Natural killer cell (primary cell): ENCODE measurements at regions of chr1 and their contacts with region 1.

Region 1: DNA sequence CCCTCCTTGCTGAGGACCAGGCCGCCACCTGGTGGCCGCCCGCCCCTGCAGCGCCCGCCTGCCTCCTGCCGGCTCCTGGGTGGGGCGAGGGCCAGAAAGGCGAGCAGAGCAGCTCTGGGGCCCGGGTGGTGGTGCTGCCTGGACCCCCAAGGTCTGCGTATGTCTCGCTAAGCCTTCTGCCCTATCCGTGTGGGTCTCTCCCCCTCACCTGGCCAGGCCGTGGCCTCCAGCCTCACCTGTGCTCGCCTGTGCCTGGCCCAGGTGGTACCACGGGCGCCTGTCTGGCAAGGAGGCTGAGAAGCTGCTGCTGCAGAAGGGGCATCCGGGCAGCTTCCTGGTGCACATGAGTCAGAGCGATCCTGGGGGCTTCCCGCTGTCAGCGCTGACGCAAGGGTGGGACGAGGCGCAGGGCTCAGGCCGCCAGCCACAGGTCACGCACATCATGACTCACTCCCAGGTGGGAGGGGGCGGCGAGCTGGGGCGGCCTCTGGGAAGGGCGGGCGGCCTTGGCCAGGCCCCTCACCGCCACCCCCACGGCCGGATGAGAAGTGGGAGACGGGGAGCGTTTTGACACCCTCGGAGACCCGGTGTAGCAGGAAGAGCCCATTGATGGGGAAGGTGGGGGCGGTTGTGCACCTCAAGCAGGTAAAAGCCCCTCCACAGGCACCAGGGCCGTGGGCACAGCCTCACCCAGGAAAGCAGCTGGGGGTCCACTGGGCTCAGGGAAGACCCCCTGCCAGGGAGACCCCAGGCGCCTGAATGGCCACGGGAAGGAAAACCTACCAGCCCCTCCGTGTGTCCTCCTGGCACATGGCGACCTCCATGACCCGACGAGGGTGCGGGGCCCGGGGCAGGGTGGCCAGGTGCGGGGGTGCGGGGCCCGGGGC is 9.9 kb downstream of the RNF223 start:
- DNase-seq: peak; percentile 79 to 91
- ATAC-seq: peak; percentile 66 to 85 (median 76)
- H3K4me3 ChIP-seq: no peak overlapping the region
- H3K4me3 Mint-ChIP-seq: peak overlapping the region; percentile 52
- H3K27ac ChIP-seq: no peak overlapping the region
- H3K27ac Mint-ChIP-seq: peak overlapping the region; percentile 48 to 90
- H3K4me1 ChIP-seq: peaks cover 32% of the 10 kb centered on the region
- H3K4me1 Mint-ChIP-seq: peaks cover 0 to 12% of the 10 kb centered on the region in 2 donors
- H3K27me3 ChIP-seq: peaks cover 36% of the 10 kb centered on the region
- H3K27me3 Mint-ChIP-seq: peaks cover 0 to 22% of the 10 kb centered on the region in 2 donors
- CTCF ChIP-seq: peak; percentile 77

Region 2: DNA sequence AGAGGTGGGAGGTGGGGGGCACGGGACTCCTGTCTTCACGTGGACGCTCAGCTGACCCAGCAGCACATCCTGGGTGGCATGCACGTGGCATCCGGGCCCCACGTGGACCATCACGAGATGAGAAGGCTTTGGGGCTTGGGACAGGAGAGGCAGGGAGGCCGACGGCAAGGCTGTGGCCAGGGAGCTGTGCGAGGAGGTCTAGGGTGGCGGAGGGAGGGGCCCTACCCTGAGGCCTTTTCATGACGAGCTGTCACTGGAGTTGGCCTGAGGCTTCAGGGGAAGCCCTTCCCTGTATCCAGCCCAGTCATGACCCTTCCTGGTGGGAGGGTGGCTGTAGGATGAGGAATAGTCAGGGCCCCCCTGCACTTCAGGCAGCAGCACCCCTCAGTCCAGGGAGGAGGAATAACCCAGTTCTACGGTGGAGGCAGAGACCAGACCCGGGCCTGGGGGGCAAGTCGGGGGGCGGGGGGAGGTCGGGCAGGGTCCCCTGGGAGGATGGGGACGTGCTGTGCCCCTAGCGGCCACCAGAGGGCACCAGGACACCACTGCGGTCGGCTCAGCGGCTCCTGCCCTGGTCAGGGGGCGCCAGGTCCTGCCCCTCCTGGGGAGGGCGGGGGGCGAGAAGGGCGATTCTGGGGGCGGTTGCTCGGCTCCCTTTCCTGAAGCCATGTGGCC is 80.3 kb before region 1 on chr1:
- intact Hi-C with region 1: loop called (anchors 1 kb)
- DNase-seq: peak; percentile 63 to 78
- ATAC-seq: peak; percentile 68 to 98 (median 91)
- H3K4me3 ChIP-seq: no peak overlapping the region
- H3K4me3 Mint-ChIP-seq: no peak overlapping the region
- H3K27ac ChIP-seq: no peak overlapping the region
- H3K27ac Mint-ChIP-seq: no peak overlapping the region
- H3K4me1 ChIP-seq: no peaks in the 10 kb centered on the region
- H3K4me1 Mint-ChIP-seq: no peaks in the 10 kb centered on the region
- H3K27me3 ChIP-seq: no peaks in the 10 kb centered on the region
- H3K27me3 Mint-ChIP-seq: peaks cover 21 to 27% of the 10 kb centered on the region in 2 donors
- CTCF ChIP-seq: peak; percentile 97